Activated naive CD4-positive, alpha-beta T cell treated with anti-CD3 and anti-CD28 coated beads for 36 hours (primary cell): ENCODE measurements at regions of chr19 and their contacts with region 1.

Region 1: GRCh38 chr19:19459707-19460251 is 54.3 kb downstream of the GATAD2A start:
- DNase-seq: peak; percentile 89
- H3K4me3 Mint-ChIP-seq: peak overlapping the region; percentile 76
- H3K27ac Mint-ChIP-seq: peak overlapping the region; percentile 96
- H3K4me1 Mint-ChIP-seq: peaks cover 86% of the 10 kb centered on the region
- H3K27me3 Mint-ChIP-seq: no peaks in the 10 kb centered on the region

Region 2: DNA sequence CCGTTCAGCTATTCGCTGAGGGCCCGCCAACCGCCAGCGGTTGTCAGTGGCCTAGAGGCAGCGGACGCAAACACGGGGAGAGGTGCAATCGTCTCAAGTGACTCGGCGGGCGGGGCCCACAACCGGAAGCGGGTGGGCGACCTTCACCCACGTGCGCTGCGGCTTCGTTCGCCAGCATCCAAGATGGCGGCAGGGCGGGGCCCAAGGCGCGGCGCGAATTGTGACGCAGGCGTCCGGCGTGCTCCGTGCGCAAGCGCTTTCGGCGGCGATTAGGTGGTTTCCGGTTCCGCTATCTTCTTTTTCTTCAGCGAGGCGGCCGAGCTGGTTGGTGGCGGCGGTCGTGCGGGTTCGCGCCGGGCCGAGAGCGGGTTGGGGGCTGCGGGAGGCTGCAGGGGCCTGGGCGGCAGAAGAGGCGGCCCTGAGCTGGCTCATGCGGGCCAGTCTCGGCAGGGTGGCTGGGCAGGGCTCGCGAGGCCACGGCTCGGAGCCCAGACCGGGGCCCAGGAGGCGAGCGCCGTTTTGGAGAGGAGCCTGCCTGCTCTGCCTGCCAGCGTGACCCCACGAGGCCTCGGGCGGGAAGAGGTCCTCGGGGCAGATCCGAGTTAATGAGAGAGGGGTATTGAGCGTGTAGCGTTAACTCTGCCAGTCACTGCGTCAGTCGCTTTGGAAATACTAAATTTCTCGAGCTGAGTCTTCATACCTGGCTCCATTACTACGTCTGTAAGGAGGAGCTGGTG is 888.0 kb before region 1 on chr19 and contains the start of gene UBA52:
- CTCF ChIA-PET with region 1: no interaction called
- intact Hi-C with region 1: loop called (anchors 5 kb)
- DNase-seq: peak; percentile 99
- H3K4me3 Mint-ChIP-seq: peak within 1 kb of the TSS; percentile 90
- H3K27ac Mint-ChIP-seq: peak within 1 kb of the TSS; percentile 93
- H3K4me1 Mint-ChIP-seq: peaks cover 30% of the 10 kb centered on the region
- H3K27me3 Mint-ChIP-seq: no peaks in the 10 kb centered on the region
- total RNA-seq, gene UBA52: 1,997 to 2,122 TPM

Region 3: GRCh38 chr19:19385108-19385899 is 74.5 kb before region 1 on chr19:
- CTCF ChIA-PET with region 1: interaction called, 3 read pairs
- intact Hi-C with region 1: loop called (anchors 1 kb)
- DNase-seq: peak; percentile 100
- H3K4me3 Mint-ChIP-seq: peak overlapping the region; percentile 84
- H3K27ac Mint-ChIP-seq: peak overlapping the region; percentile 72
- H3K4me1 Mint-ChIP-seq: peaks cover 38% of the 10 kb centered on the region
- H3K27me3 Mint-ChIP-seq: no peaks in the 10 kb centered on the region

Region 4: GRCh38 chr19:19444681-19445155 is 15.1 kb before region 1 on chr19:
- CTCF ChIA-PET with region 1: interaction called, 5 read pairs
- intact Hi-C with region 1: loop called (anchors 1 kb)
- DNase-seq: peak; percentile 47
- H3K4me3 Mint-ChIP-seq: no peak overlapping the region
- H3K27ac Mint-ChIP-seq: peak overlapping the region; percentile 66
- H3K4me1 Mint-ChIP-seq: peaks cover 72% of the 10 kb centered on the region
- H3K27me3 Mint-ChIP-seq: no peaks in the 10 kb centered on the region

Region 5: DNA sequence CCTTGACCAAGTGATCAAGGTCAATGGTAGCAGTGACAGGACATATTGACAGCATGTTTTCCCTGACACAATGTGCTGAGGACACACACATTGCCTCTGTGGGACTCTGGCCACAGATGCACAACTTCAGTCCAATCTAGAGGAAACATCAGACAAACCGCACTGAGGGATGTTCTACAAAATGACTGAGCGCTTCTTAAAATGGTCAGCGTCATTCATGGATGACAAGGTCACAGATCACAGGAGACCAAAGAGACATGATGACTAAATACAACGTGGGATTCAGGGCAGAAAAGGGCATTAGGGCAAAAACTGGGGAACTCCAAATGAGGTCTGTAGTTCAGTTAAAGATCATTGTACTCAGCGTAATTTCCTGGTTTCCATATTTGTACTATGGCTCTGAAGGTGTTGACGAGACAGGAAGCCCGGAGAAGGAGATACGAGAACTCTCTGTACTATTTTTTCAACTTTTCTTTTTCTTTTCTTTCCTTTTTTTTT is 138.1 kb after region 1 on chr19:
- CTCF ChIA-PET with region 1: no interaction called
- intact Hi-C with region 1: loop called (anchors 1 kb)
- DNase-seq: peak; percentile 78
- H3K4me3 Mint-ChIP-seq: peak overlapping the region; percentile 75
- H3K27ac Mint-ChIP-seq: peak overlapping the region; percentile 100
- H3K4me1 Mint-ChIP-seq: peaks cover 85% of the 10 kb centered on the region
- H3K27me3 Mint-ChIP-seq: no peaks in the 10 kb centered on the region